HepG2 (cell line): ENCODE measurements at regions of chr3 and their contacts with region 1.

Region 1: DNA sequence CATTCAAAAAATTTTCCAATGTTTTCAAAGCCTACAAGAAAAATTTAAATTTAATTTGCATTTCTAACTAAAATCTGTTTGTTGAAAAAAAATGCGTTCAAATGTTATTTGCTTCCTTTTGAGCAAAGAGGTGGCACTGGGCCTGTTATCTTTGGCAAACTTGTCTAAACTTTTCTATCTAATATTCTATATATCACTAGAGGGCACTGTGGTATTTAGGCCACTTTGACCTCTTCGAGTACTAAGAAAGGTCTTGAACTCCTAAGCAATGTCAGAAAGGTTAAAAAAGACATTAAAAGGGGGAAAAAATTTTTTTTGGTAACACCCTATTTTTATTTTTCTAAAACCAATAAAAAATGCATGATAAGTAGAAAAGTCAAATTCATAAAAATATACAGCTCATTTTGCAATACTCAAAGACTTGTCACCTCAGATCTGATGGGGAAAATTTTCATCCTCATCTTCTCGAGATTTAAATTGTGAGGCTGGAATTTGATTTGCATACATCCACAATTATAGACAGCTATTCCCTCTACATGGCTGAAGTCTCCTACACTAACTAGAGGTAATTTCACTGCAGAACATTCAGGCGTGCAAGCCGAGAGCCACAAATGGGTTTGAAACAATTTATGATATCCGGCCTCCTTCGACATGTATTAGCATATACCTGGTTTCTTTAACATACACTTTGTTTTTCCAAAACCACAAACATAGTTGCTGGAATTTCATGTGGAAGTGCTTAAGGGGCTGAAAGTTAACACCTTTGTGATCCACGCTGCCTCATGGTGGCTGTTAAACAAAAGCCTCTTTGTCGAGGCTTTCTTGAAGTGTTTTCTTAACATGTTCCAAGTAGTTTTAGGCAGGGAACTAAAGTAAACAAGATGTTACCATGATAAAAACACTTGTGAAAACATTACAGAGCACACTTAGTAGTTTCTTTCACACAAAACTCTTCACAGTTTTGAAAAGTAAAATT is 576.4 kb downstream of the FOXP1 start:
- DNase-seq: peak; percentile 20
- ATAC-seq: peak; percentile 75
- H3K4me3 ChIP-seq: no peak overlapping the region
- H3K27ac ChIP-seq: no peak overlapping the region
- H3K4me1 ChIP-seq: peaks cover 49% of the 10 kb centered on the region
- H3K27me3 ChIP-seq: no peaks in the 10 kb centered on the region
- CTCF ChIP-seq: peak; percentile 53
- EP300 ChIP-seq: no peak
- POLR2A ChIP-seq: no peak
- RAD21 ChIP-seq: peak; percentile 33; the same call in 1 of the 2 replicates

Region 2: GRCh38 chr3:71069797-71070196 is 62.7 kb after region 1 on chr3:
- CTCF ChIA-PET with region 1: interaction called, 11 read pairs
- POLR2A ChIA-PET with region 1: no interaction called
- in situ Hi-C with region 1: no loop called
- intact Hi-C with region 1: loop called (anchors 1 kb)
- DNase-seq: peak; percentile 64
- ATAC-seq: peak; percentile 58
- H3K4me3 ChIP-seq: no peak overlapping the region
- H3K27ac ChIP-seq: no peak overlapping the region
- H3K4me1 ChIP-seq: peaks cover 47% of the 10 kb centered on the region
- H3K27me3 ChIP-seq: no peaks in the 10 kb centered on the region; a peak in 1 of 5 replicates
- CTCF ChIP-seq: peak; percentile 59
- EP300 ChIP-seq: no peak
- POLR2A ChIP-seq: no peak
- RAD21 ChIP-seq: peak; percentile 50; the same call in 1 of the 2 replicates

Region 3: GRCh38 chr3:71195492-71195891 is 188.4 kb after region 1 on chr3:
- CTCF ChIA-PET with region 1: no interaction called
- POLR2A ChIA-PET with region 1: no interaction called
- in situ Hi-C with region 1: no loop called
- intact Hi-C with region 1: no loop called
- DNase-seq: peak; percentile 28
- ATAC-seq: no peak
- H3K4me3 ChIP-seq: no peak overlapping the region
- H3K27ac ChIP-seq: no peak overlapping the region
- H3K4me1 ChIP-seq: peaks cover 34% of the 10 kb centered on the region
- H3K27me3 ChIP-seq: no peaks in the 10 kb centered on the region
- CTCF ChIP-seq: no peak
- EP300 ChIP-seq: 0 out of 4 replicates have a peak, but pooled peaks of 1 of the 2 experiments have one; percentile 10
- POLR2A ChIP-seq: no peak
- RAD21 ChIP-seq: no peak

Region 4: DNA sequence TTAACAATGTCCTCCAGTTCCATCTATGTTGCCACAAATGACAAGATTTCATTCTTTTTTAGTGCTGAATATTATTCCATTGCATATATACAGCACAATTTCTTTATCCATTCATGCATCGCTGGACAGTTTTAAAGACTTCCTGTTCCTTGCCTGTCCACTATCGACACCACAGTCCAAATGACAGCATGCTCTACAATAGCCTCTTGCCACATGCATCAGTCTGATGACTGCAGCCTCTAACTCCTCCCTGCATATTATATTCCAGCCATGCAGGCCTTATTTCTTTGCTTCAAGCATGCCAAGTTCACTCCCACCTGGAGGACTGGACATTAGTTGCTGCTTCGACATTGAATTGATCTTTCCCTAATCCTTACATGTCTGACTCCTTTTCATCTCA is 270.2 kb after region 1 on chr3:
- CTCF ChIA-PET with region 1: no interaction called
- POLR2A ChIA-PET with region 1: no interaction called
- in situ Hi-C with region 1: no loop called
- intact Hi-C with region 1: no loop called
- DNase-seq: no peak
- ATAC-seq: no peak
- H3K4me3 ChIP-seq: no peak overlapping the region
- H3K27ac ChIP-seq: no peak overlapping the region
- H3K4me1 ChIP-seq: peaks cover 5% of the 10 kb centered on the region; the same call in 1 of the 2 replicates
- H3K27me3 ChIP-seq: no peaks in the 10 kb centered on the region
- CTCF ChIP-seq: no peak
- EP300 ChIP-seq: no peak
- POLR2A ChIP-seq: no peak
- RAD21 ChIP-seq: no peak

Region 5: GRCh38 chr3:71305231-71306206 is 298.4 kb after region 1 on chr3:
- CTCF ChIA-PET with region 1: no interaction called
- POLR2A ChIA-PET with region 1: no interaction called
- in situ Hi-C with region 1: no loop called
- intact Hi-C with region 1: loop called (anchors 2 kb)
- DNase-seq: peak; percentile 70
- ATAC-seq: peak; percentile 87
- H3K4me3 ChIP-seq: peak overlapping the region; percentile 66 to 75 (median 74)
- H3K27ac ChIP-seq: peak overlapping the region; percentile 79
- H3K4me1 ChIP-seq: peaks cover 66% of the 10 kb centered on the region
- H3K27me3 ChIP-seq: no peaks in the 10 kb centered on the region
- CTCF ChIP-seq: no peak
- EP300 ChIP-seq: 0 out of 4 replicates have a peak, but pooled peaks of 1 of the 2 experiments have one; percentile 3
- POLR2A ChIP-seq: peak; percentile 21 to 52; a peak in 2 of 4 replicates
- RAD21 ChIP-seq: no peak

Region 6: GRCh38 chr3:71599416-71599815 is 592.3 kb after region 1 on chr3:
- CTCF ChIA-PET with region 1: no interaction called
- POLR2A ChIA-PET with region 1: no interaction called
- in situ Hi-C with region 1: loop called (anchors 10 kb)
- intact Hi-C with region 1: no loop called
- DNase-seq: no peak
- ATAC-seq: no peak
- H3K4me3 ChIP-seq: no peak overlapping the region
- H3K27ac ChIP-seq: no peak overlapping the region
- H3K4me1 ChIP-seq: no peaks in the 10 kb centered on the region
- H3K27me3 ChIP-seq: peaks cover 0 to 10% of the 10 kb centered on the region in 2 experiments; a peak in 2 of 5 replicates
- CTCF ChIP-seq: no peak
- EP300 ChIP-seq: no peak
- POLR2A ChIP-seq: no peak
- RAD21 ChIP-seq: no peak

Region 7: DNA sequence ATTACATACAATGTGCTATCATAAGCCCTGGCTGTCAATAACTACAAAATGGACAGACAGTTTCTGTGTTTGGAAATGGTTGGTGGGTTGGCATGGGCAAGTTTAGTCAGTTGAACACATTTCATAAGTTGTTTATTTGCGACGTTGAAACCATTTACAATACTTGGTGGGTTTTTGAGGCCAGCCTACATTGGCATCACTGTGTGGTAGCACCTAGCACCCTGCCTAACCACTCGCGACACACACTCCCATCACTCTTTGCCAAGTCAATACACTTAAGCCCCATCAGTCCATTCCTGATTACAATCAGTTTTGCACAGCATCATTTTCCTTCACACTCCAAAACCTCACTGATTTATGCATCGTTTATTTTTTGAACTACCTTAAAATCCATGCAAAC is 764.0 kb after region 1 on chr3:
- CTCF ChIA-PET with region 1: no interaction called
- POLR2A ChIA-PET with region 1: no interaction called
- in situ Hi-C with region 1: no loop called
- intact Hi-C with region 1: no loop called
- DNase-seq: no peak
- ATAC-seq: no peak
- H3K4me3 ChIP-seq: no peak overlapping the region
- H3K27ac ChIP-seq: no peak overlapping the region
- H3K4me1 ChIP-seq: no peaks in the 10 kb centered on the region
- H3K27me3 ChIP-seq: peaks cover 0 to 13% of the 10 kb centered on the region in 2 experiments; a peak in 2 of 5 replicates
- CTCF ChIP-seq: no peak
- EP300 ChIP-seq: no peak
- POLR2A ChIP-seq: no peak
- RAD21 ChIP-seq: no peak